Activated naive CD4-positive, alpha-beta T cell treated with anti-CD3 and anti-CD28 coated beads for 36 hours (primary cell): ENCODE measurements at regions of chr7 and their contacts with region 1.

Region 1: GRCh38 chr7:1503816-1504775 is at the start of gene INTS1:
- DNase-seq: peak; percentile 92
- H3K4me3 Mint-ChIP-seq: peak within 1 kb of the TSS; percentile 93
- H3K27ac Mint-ChIP-seq: peak within 1 kb of the TSS; percentile 76
- H3K4me1 Mint-ChIP-seq: peaks cover 41% of the 10 kb centered on the region
- H3K27me3 Mint-ChIP-seq: no peaks in the 10 kb centered on the region
- total RNA-seq, gene INTS1: 97.6 to 103 TPM

Region 2: GRCh38 chr7:1459522-1459892 is 44.6 kb before region 1 on chr7:
- CTCF ChIA-PET with region 1: no interaction called
- intact Hi-C with region 1: loop called (anchors 2 kb)
- DNase-seq: peak; percentile 98
- H3K4me3 Mint-ChIP-seq: no peak overlapping the region
- H3K27ac Mint-ChIP-seq: no peak overlapping the region
- H3K4me1 Mint-ChIP-seq: peaks cover 19% of the 10 kb centered on the region
- H3K27me3 Mint-ChIP-seq: no peaks in the 10 kb centered on the region

Region 3: GRCh38 chr7:1555809-1556540 is 51.9 kb after region 1 on chr7 and contains the start of gene TMEM184A:
- CTCF ChIA-PET with region 1: interaction called, 4 read pairs
- intact Hi-C with region 1: loop called (anchors 2 kb)
- DNase-seq: peak; percentile 72
- H3K4me3 Mint-ChIP-seq: no peak within 1 kb of the TSS
- H3K27ac Mint-ChIP-seq: no peak within 1 kb of the TSS
- H3K4me1 Mint-ChIP-seq: peaks cover 3% of the 10 kb centered on the region
- H3K27me3 Mint-ChIP-seq: no peaks in the 10 kb centered on the region
- total RNA-seq, gene TMEM184A: 0.36 TPM in 1 of 2 experiments, not detected in the other

Region 4: DNA sequence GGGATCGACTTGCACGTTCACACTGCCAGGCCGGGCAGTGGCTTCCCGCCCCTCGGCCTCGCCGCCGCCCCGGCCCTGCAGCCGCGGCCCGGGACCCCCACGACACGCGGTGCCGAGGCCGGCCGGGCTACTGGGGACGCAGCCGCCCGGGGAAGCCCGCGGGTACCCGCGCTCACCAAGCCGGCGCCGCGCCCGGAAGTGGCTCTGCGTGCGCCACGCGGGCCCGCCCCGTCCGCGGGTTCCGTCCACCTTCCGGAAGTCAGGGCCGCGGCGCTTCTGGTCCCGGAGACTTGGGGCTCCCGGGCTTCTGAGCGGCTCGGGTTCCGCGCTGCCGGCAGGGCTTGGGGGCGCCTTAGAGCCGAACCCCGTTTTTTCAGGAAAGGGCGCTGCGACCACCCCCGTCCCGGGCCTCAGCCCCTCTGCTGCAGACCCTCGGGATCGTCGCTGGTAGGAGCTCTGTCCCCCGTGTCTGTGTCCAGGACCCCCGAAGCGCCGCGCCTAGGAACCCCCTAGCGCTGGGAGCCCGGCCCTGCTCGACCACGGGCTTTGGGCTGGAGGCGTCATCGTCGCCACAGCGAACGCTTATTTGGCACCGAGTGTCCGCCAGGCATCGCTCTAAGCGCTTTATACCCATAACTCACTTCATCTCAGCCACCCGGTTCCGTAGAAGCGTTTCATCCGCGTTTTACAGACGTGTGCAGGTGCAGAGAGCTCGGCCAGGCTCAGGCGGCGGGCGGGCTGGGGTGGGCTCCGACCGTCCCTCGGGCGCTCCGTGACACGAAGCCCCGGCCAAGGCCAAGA is 65.9 kb after region 1 on chr7 and contains the start of gene PSMG3:
- CTCF ChIA-PET with region 1: no interaction called
- intact Hi-C with region 1: loop called (anchors 1 kb)
- DNase-seq: peak; percentile 91
- H3K4me3 Mint-ChIP-seq: peak within 1 kb of the TSS; percentile 87
- H3K27ac Mint-ChIP-seq: peak within 1 kb of the TSS; percentile 87
- H3K4me1 Mint-ChIP-seq: peaks cover 37% of the 10 kb centered on the region
- H3K27me3 Mint-ChIP-seq: no peaks in the 10 kb centered on the region
- total RNA-seq, gene PSMG3: 29.8 to 33.9 TPM

Region 5: DNA sequence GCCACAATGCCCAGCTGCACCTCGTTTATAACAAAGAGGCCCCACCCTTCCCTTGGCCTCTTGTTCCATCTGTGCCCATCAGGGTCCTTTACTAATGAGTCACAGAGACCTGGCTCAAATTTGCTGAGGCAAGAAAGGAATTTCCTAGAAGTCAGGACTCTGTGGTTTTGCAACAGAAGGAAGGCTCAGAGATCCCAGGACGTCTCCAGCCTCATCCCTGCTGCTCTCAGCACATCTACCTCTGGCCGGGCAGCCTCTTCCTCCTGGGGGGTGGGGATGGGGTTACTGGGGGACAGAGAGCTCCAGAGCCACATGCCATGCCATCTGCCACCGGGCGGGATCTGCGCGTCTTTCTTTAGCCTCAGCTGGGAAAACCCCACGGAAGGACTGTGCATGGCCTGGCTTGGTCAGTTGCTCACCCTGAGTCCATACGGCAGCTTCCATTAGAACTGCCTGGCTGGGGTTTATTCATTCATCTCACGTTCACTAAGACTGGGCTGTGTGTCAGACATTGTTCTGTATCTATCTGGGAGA is 107.7 kb after region 1 on chr7:
- CTCF ChIA-PET with region 1: no interaction called
- intact Hi-C with region 1: no loop called
- DNase-seq: no peak
- H3K4me3 Mint-ChIP-seq: no peak overlapping the region
- H3K27ac Mint-ChIP-seq: no peak overlapping the region
- H3K4me1 Mint-ChIP-seq: no peaks in the 10 kb centered on the region
- H3K27me3 Mint-ChIP-seq: no peaks in the 10 kb centered on the region